HCT116 (cell line): ENCODE measurements at regions of chr12 and their contacts with region 1.

Region 1: GRCh38 chr12:75641031-75641780 is 129.8 kb upstream of the KRR1 start:
- DNase-seq: peak; percentile 93
- ATAC-seq: peak; percentile 68
- H3K4me3 ChIP-seq: peak overlapping the region in 1 of 2 experiments; percentile 9; a peak in 1 of 4 replicates
- H3K27ac ChIP-seq: peak overlapping the region; percentile 99
- H3K4me1 ChIP-seq: peaks cover 91 to 100% of the 10 kb centered on the region in 2 experiments
- H3K27me3 ChIP-seq: no peaks in the 10 kb centered on the region
- CTCF ChIP-seq: no peak
- POLR2A ChIP-seq: no peak
- RAD21 ChIP-seq: peak; percentile 36

Region 2: DNA sequence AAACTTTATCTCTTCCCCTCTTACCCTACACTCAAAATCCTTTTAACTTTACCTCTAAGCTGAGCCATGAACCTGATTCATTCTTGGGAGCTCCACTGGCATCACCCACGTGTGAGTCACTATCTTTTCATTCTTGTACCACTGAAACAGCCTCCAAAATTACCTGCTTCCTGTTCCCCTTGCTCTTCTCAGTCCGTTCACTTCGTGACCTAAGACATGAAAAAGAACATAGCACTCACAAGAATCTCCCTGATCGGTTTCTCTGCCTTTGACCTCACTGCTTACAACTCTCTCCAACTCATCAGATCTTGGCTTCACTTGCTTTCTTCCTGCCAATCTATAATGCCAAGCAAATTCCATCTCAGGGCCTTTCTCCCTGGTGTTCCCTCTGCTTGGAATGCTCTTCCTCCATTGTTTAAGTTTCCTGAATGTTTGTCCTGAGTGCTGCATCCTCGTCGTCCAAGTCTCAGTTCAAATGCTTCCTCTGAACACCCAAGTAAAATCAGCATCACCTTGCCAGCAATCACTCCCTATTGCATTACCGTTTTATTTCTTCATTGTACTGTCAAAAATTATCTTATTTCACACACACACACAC is 151.5 kb before region 1 on chr12:
- CTCF ChIA-PET with region 1: no interaction called
- POLR2A ChIA-PET with region 1: no interaction called
- RAD21 ChIA-PET with region 1: no interaction called
- intact Hi-C with region 1: no loop called
- DNase-seq: peak; percentile 62
- ATAC-seq: peak; percentile 64
- H3K4me3 ChIP-seq: peak overlapping the region in 1 of 2 experiments; percentile 9; a peak in 1 of 4 replicates
- H3K27ac ChIP-seq: peak overlapping the region; percentile 82
- H3K4me1 ChIP-seq: peaks cover 27 to 50% of the 10 kb centered on the region in 2 experiments
- H3K27me3 ChIP-seq: no peaks in the 10 kb centered on the region
- CTCF ChIP-seq: no peak
- POLR2A ChIP-seq: no peak
- RAD21 ChIP-seq: no peak

Region 3: DNA sequence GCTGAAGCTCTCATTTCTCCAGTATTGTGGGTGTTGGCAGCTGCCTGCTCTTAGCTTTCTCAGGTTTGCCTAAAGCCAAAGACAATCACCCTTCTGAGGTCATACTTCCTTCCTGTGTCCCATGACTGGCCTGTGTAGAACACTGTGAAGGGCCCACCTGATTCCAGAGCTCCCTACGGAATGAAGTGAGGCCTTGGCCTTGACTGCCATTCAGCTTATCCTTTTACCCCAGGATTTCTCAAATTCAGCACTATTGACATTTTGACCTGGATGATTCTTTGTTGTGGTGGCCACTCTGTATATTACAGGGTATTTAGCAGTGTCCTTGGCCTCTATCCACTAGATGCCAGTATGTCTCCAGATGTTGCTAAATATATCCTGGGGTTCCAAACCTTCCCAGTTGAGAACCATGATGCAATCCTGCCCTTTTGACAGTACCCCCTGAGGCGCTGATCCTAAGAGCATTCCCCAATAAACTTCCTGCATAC is 17.5 kb before region 1 on chr12:
- CTCF ChIA-PET with region 1: no interaction called
- POLR2A ChIA-PET with region 1: interaction called, 25 read pairs
- RAD21 ChIA-PET with region 1: no interaction called
- intact Hi-C with region 1: no loop called
- DNase-seq: peak; percentile 89
- ATAC-seq: peak; percentile 92
- H3K4me3 ChIP-seq: no peak overlapping the region
- H3K27ac ChIP-seq: peak overlapping the region; percentile 99
- H3K4me1 ChIP-seq: peaks cover 39 to 70% of the 10 kb centered on the region in 2 experiments
- H3K27me3 ChIP-seq: no peaks in the 10 kb centered on the region
- CTCF ChIP-seq: peak; percentile 49 to 64 (median 51); a peak in 5 of 6 replicates
- POLR2A ChIP-seq: peak; percentile 26
- RAD21 ChIP-seq: peak; percentile 81

Region 4: DNA sequence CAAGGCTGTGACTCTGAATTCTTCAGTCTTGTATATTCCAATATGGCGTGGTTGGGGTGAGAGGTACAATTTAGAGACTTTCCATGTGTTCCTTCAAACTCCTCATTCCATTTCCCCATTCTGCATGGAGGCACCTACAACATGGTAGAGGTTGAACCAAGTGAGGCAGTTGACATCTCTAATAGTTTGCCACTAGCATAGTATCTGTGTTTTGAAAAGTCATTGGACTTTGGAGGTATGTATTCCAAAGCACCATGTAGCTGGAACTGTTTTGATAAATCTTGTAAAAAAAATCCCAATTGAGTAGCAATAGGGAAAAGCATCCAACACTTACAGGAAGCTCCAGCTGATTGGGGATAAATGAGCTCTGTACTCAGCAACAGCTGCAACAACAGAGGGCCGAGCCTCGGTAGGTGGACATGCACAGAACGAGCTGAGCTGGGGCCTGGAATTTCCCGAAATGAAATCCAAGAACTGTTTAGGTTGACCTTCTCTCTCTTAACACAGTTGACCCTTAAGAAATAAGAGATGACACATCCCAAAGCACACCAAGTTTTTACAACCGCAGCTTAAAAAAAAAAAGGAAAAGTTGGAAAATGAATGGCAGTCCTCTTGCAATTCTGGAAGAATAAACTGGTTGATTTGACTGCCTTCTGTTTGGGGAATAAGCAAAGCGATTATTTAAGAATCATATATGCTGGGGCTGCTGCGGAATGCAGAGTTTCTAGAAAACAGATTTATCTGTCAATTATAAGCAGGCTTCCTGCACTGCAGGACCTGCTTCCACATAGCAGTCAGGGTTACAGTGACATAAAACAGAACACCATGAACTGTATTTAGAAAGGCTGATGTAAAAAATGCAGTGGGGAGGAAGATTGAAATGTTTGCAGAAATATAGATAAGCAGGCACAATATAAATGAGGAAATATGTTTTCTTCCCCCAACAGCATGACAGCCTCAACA is 64.8 kb after region 1 on chr12:
- CTCF ChIA-PET with region 1: no interaction called
- POLR2A ChIA-PET with region 1: interaction called, 12 read pairs
- RAD21 ChIA-PET with region 1: no interaction called
- intact Hi-C with region 1: no loop called
- DNase-seq: peak; percentile 64
- ATAC-seq: peak; percentile 52
- H3K4me3 ChIP-seq: peak overlapping the region in 1 of 2 experiments; percentile 19; a peak in 1 of 4 replicates
- H3K27ac ChIP-seq: peak overlapping the region; percentile 100
- H3K4me1 ChIP-seq: peaks cover 88 to 100% of the 10 kb centered on the region in 2 experiments
- H3K27me3 ChIP-seq: no peaks in the 10 kb centered on the region
- CTCF ChIP-seq: no peak
- POLR2A ChIP-seq: no peak
- RAD21 ChIP-seq: 0 out of 2 replicates have a peak, but pooled peaks have one; percentile 2